ENCODE measurements at regions of chr6 and their contacts with region 1.

Region 1: DNA sequence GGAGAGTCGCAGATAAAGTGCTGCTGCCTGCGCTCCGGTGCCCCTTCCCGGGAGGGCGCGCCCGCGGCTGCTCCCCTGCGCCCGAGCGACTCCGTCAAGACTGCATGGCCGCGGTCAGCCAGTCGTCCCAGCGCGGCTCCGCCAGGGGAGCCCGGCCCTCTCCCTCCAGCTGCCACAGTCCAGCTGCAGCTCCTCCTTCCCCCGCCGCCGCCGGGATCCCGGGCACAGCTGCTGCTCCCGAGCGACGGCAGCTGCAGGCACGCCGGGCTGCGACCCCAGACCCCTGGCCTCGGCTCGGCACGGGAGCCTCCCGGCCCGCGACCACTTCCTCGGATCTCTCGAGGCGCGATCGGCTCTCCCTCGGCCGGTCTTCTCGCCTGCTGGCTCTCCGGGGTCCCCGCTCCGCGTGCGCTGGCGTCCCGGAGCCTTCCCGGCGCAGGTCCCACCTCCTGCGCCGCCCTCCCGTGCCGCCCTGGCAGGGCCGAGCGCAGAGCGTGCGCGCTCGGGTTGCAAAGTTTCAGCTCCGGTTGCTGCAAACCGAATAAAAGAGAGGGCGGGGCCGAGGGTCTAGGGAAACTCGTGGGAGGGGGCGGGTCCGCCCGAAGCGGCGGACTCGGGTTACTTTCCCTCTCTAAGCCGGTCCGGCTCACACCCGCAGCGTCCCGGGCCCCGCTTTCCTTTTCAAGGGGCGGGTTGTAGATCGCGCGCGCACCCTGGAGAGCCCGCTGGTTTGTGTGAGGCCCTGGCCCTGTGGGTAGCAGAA is at the start of gene CNKSR3:
- DNase-seq: peak; percentile 95
- ATAC-seq: peak; percentile 87
- H3K4me3 ChIP-seq: peak within 1 kb of the TSS; percentile 96 to 99 (median 98)
- H3K27ac ChIP-seq: peak within 1 kb of the TSS; percentile 94
- H3K4me1 ChIP-seq: peaks cover 43% of the 10 kb centered on the region
- H3K27me3 ChIP-seq: no peaks in the 10 kb centered on the region; a peak in 1 of 5 replicates
- CTCF ChIP-seq: peak; percentile 50
- EP300 ChIP-seq: peak in 1 of 2 experiments; percentile 53; a peak in 2 of 4 replicates
- POLR2A ChIP-seq: peak; percentile 89
- RAD21 ChIP-seq: peak; percentile 73
- total RNA-seq, gene CNKSR3: 38.3 and 38.6 TPM in 2 replicates

Region 2: GRCh38 chr6:154359161-154359574 is 151.2 kb before region 1 on chr6:
- CTCF ChIA-PET with region 1: no interaction called
- POLR2A ChIA-PET with region 1: no interaction called
- in situ Hi-C with region 1: no loop called
- intact Hi-C with region 1: no loop called
- DNase-seq: no peak
- ATAC-seq: peak; percentile 67
- H3K4me3 ChIP-seq: no peak overlapping the region
- H3K27ac ChIP-seq: no peak overlapping the region
- H3K4me1 ChIP-seq: peaks cover 11% of the 10 kb centered on the region; the same call in 1 of the 2 replicates
- H3K27me3 ChIP-seq: peaks cover 0 to 8% of the 10 kb centered on the region in 2 experiments; a peak in 2 of 5 replicates
- CTCF ChIP-seq: no peak
- EP300 ChIP-seq: no peak
- POLR2A ChIP-seq: no peak
- RAD21 ChIP-seq: no peak

Region 3: GRCh38 chr6:154414021-154414813 is 96.1 kb before region 1 on chr6:
- CTCF ChIA-PET with region 1: no interaction called
- POLR2A ChIA-PET with region 1: interaction called, 7 read pairs
- in situ Hi-C with region 1: no loop called
- intact Hi-C with region 1: loop called (anchors 1 kb)
- DNase-seq: peak; percentile 67
- ATAC-seq: peak; percentile 84
- H3K4me3 ChIP-seq: no peak overlapping the region
- H3K27ac ChIP-seq: peak overlapping the region; percentile 33
- H3K4me1 ChIP-seq: peaks cover 33% of the 10 kb centered on the region
- H3K27me3 ChIP-seq: no peaks in the 10 kb centered on the region
- CTCF ChIP-seq: no peak
- EP300 ChIP-seq: peak in 1 of 2 experiments; percentile 67; a peak in 2 of 4 replicates
- POLR2A ChIP-seq: no peak
- RAD21 ChIP-seq: no peak

Region 4: GRCh38 chr6:154441995-154442310 is 68.4 kb before region 1 on chr6:
- CTCF ChIA-PET with region 1: no interaction called
- POLR2A ChIA-PET with region 1: interaction called, 15 read pairs
- in situ Hi-C with region 1: no loop called
- intact Hi-C with region 1: loop called (anchors 2 kb)
- DNase-seq: no peak
- ATAC-seq: no peak
- H3K4me3 ChIP-seq: no peak overlapping the region
- H3K27ac ChIP-seq: no peak overlapping the region
- H3K4me1 ChIP-seq: peaks cover 40% of the 10 kb centered on the region
- H3K27me3 ChIP-seq: no peaks in the 10 kb centered on the region
- CTCF ChIP-seq: no peak
- EP300 ChIP-seq: no peak
- POLR2A ChIP-seq: no peak
- RAD21 ChIP-seq: no peak

Region 5: GRCh38 chr6:154488802-154489437 is 21.4 kb before region 1 on chr6:
- CTCF ChIA-PET with region 1: no interaction called
- POLR2A ChIA-PET with region 1: interaction called, 8 read pairs
- in situ Hi-C with region 1: no loop called
- intact Hi-C with region 1: loop called (anchors 1 kb)
- DNase-seq: no peak
- ATAC-seq: no peak
- H3K4me3 ChIP-seq: no peak overlapping the region
- H3K27ac ChIP-seq: no peak overlapping the region
- H3K4me1 ChIP-seq: peaks cover 59% of the 10 kb centered on the region
- H3K27me3 ChIP-seq: no peaks in the 10 kb centered on the region
- CTCF ChIP-seq: no peak
- EP300 ChIP-seq: no peak
- POLR2A ChIP-seq: no peak
- RAD21 ChIP-seq: no peak

Region 6: DNA sequence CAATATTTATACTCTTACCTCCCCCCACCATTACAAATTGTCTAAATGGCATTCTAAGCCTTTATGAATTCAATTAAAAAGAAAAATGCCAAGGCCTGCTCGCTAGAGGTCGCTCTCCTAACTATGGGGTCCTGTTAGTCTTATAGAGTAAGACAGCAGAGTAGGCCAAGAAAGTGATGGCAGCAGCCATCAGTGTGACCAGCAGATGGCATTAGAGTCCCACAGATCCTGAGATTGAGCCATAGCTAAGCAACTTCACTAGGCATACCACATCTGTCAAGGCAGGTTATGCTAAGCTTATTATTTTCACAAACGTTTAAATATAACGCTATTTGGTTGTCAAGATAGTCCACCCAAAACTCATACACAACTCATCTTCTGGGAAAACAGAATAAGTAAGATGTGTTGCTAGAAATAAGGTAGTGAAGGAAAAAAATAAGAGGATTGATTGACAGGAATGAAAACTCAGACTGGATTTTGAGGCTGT is 165.3 kb after region 1 on chr6:
- CTCF ChIA-PET with region 1: no interaction called
- POLR2A ChIA-PET with region 1: no interaction called
- in situ Hi-C with region 1: no loop called
- intact Hi-C with region 1: loop called (anchors 2 kb)
- DNase-seq: peak; percentile 95
- ATAC-seq: peak; percentile 99
- H3K4me3 ChIP-seq: no peak overlapping the region
- H3K27ac ChIP-seq: no peak overlapping the region
- H3K4me1 ChIP-seq: peaks cover 5% of the 10 kb centered on the region; the same call in 1 of the 2 replicates
- H3K27me3 ChIP-seq: no peaks in the 10 kb centered on the region
- CTCF ChIP-seq: peak; percentile 98
- EP300 ChIP-seq: no peak
- POLR2A ChIP-seq: no peak
- RAD21 ChIP-seq: peak; percentile 97

Region 7: GRCh38 chr6:154686162-154686561 is 175.8 kb after region 1 on chr6:
- CTCF ChIA-PET with region 1: no interaction called
- POLR2A ChIA-PET with region 1: no interaction called
- in situ Hi-C with region 1: no loop called
- intact Hi-C with region 1: no loop called
- DNase-seq: no peak
- ATAC-seq: no peak
- H3K4me3 ChIP-seq: no peak overlapping the region
- H3K27ac ChIP-seq: no peak overlapping the region
- H3K4me1 ChIP-seq: no peaks in the 10 kb centered on the region
- H3K27me3 ChIP-seq: no peaks in the 10 kb centered on the region
- CTCF ChIP-seq: no peak
- EP300 ChIP-seq: no peak
- POLR2A ChIP-seq: no peak
- RAD21 ChIP-seq: no peak

Region 8: GRCh38 chr6:154805288-154805911 is 295.1 kb after region 1 on chr6:
- CTCF ChIA-PET with region 1: no interaction called
- POLR2A ChIA-PET with region 1: no interaction called
- in situ Hi-C with region 1: no loop called
- intact Hi-C with region 1: loop called (anchors 10 kb)
- DNase-seq: peak; percentile 43
- ATAC-seq: peak; percentile 56; the same call in 2 of the 3 replicates
- H3K4me3 ChIP-seq: no peak overlapping the region
- H3K27ac ChIP-seq: no peak overlapping the region
- H3K4me1 ChIP-seq: peaks cover 10% of the 10 kb centered on the region; the same call in 1 of the 2 replicates
- H3K27me3 ChIP-seq: no peaks in the 10 kb centered on the region
- CTCF ChIP-seq: peak; percentile 39
- EP300 ChIP-seq: no peak
- POLR2A ChIP-seq: no peak
- RAD21 ChIP-seq: no peak

Measured in HepG2 (cell line).